ENCODE measurements at regions of chrX and their contacts with region 1.

Region 1: DNA sequence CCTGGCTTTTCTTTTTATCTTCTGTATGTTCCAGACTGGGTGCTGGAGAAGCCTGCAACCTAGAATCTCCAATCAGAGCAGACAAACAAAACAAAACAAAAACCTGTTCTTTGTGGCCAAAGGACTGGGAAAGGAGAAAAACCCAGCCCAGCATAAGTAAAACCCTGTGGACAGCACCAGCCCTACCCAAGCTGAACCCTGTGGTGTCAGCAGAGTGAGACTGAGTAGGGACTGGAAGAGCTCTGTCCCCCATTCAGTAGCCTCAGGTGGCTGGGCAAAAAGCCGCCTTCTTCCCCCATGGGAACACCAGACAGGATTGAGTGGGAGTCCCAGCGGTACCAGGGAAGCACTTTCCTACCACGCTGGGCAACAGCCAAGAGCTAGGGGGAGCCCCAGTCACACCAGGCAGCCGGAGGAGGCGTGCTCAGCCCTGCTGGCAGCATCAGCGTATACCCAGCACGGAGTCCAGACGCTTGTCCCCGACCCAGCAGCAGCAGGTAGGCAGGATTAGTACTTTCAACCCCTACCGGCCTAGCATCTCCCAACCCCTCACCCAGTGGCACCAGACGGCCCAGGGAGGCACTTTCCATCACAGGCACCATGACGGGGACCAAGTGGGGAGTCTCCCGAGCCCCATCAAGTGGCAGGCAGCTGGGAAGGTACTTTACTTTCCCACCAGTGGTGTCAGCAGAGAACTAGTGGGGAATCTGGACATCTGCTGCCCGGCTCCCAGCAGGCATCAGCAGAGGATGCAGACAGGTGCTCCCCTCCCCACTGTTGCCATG is 8.6 kb upstream of the JADE3 start:
- DNase-seq: peak; percentile 84

Region 2: GRCh38 chrX:46978341-46979291 is 75.0 kb after region 1 on chrX:
- intact Hi-C with region 1: loop called (anchors 5 kb)
- DNase-seq: peak; percentile 85

Region 3: GRCh38 chrX:47030339-47030738 is 126.7 kb after region 1 on chrX:
- intact Hi-C with region 1: loop called (anchors 5 kb)
- DNase-seq: no peak

Region 4: GRCh38 chrX:47078129-47079043 is 174.7 kb after region 1 on chrX and contains the start of gene RGN:
- intact Hi-C with region 1: no loop called
- DNase-seq: no peak
- total RNA-seq, gene RGN: 17.1 TPM

Region 5: GRCh38 chrX:47093248-47093647 is 189.6 kb after region 1 on chrX:
- intact Hi-C with region 1: loop called (anchors 5 kb)
- DNase-seq: no peak

Region 6: DNA sequence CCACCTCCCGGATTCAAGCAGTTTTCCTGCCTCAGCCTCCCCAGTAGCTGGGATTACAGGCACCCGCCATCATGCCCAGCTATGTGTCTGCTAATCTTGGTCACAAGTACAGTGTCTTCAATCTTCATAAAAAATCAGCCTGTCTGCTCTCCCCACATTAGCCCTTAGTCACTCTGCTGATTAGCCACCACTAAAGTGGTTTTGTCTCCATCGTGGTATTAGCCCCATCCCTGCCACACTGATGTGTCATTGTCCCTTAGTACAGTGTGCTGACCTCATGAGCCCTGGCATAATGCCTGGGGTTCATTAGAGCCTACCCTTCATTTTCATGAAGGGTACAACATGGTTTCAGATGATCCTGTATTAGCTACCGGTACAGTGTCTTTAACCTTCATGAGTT is 516.6 kb after region 1 on chrX:
- intact Hi-C with region 1: no loop called
- DNase-seq: no peak

Measured in cardiac septum (tissue), 1 donor.